ENCODE measurements at regions of chr2 and their contacts with region 1.

Region 1: DNA sequence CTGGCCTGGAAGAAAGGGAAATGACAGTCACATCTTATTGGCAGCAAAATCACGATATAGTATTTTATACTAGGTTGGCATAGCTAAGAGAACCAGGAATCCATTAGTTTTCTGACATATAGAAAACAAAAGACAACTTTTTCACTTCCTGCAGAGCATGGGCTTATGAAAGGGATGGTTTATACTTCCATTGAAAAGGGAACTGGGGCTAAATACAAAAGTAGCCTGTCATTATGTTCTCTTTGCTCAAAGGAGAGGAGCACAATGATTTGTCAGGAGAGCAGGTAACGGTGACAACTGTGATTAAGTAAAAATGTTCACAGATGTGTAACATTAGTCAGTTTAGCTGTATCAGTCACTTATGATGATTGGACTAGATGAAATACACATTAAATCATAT is 46.4 kb downstream of the SLC25A12 start:
- DNase-seq: no peak
- CTCF ChIP-seq: no peak

Region 2: DNA sequence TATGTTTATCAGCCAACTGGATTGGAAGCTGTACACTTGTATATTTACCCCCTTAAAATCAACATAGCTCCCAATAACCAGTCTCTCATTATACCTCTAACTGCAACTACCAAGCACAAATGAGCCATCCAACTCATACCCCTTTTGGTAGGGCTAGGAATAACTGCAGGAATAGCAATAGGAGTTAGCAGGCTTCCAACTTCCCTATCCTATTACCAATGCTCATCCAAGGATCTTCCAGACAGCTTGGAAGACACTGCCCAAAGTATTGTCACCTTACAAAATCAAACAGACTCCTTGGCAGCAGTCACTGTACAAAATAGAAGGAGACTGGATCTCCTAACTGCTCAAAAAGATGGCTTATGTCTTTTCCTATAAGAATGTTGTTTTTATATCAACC is 15.1 kb before region 1 on chr2:
- CTCF ChIA-PET with region 1: interaction called, 10 read pairs
- POLR2A ChIA-PET with region 1: no interaction called
- DNase-seq: no peak
- CTCF ChIP-seq: no peak

Measured in GM10248 (cell line).